Activated CD4-positive, alpha-beta memory T cell treated with anti-CD3 and anti-CD28 coated beads for 36 hours (primary cell): ENCODE measurements at regions of chr1 and their contacts with region 1.

Region 1: GRCh38 chr1:12344596-12345349 is 114.9 kb downstream of the VPS13D start:
- DNase-seq: peak; percentile 50
- H3K4me3 Mint-ChIP-seq: peak overlapping the region; percentile 65
- H3K27ac Mint-ChIP-seq: peak overlapping the region; percentile 85
- H3K4me1 Mint-ChIP-seq: peaks cover 55% of the 10 kb centered on the region
- H3K27me3 Mint-ChIP-seq: no peaks in the 10 kb centered on the region

Region 2: GRCh38 chr1:12296623-12297022 is 48.1 kb before region 1 on chr1:
- CTCF ChIA-PET with region 1: no interaction called
- POLR2A ChIA-PET with region 1: no interaction called
- intact Hi-C with region 1: loop called (anchors 2 kb)
- DNase-seq: no peak
- H3K4me3 Mint-ChIP-seq: no peak overlapping the region
- H3K27ac Mint-ChIP-seq: no peak overlapping the region
- H3K4me1 Mint-ChIP-seq: peaks cover 24% of the 10 kb centered on the region
- H3K27me3 Mint-ChIP-seq: no peaks in the 10 kb centered on the region

Region 3: GRCh38 chr1:12386130-12386529 is 41.4 kb after region 1 on chr1:
- CTCF ChIA-PET with region 1: no interaction called
- POLR2A ChIA-PET with region 1: no interaction called
- intact Hi-C with region 1: loop called (anchors 5 kb)
- DNase-seq: peak; percentile 39
- H3K4me3 Mint-ChIP-seq: no peak overlapping the region
- H3K27ac Mint-ChIP-seq: peak overlapping the region; percentile 69
- H3K4me1 Mint-ChIP-seq: peaks cover 44% of the 10 kb centered on the region
- H3K27me3 Mint-ChIP-seq: no peaks in the 10 kb centered on the region

Region 4: DNA sequence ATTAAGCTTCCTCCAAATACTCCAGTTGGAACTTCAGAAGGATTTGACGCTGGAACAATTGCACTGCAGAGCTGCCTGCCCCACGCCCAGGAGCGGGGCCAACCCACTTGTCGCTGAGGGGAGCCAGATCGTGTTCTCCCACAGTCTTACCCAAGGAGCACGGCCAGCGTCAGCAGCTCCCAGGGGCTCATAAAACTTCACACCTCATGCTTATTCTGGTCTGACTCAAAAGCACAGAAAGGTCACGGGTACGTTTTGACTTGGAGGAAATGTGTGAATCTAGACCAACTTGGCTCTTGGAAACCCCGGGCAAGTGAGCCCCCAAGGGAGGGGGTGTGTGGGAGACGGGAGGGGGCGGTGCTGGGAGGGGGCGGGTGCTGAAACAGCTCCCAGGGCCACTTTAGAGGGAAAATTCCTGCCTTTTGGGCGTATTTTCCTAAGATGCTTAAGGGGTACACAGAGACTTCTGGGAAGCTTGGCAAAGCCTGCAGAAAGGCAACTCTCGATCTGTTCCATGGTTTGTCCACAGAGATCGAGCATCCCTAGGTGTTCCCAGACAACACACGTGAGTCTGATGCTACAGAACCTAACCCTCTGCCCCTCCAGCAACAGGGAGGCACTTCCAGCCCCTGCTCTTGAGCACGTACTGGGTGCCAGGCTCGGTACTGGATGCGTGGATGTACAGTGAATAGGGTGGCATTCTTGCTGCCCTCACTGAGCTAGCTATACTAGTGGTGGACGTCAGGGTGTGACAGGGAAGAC is 174.3 kb after region 1 on chr1:
- CTCF ChIA-PET with region 1: no interaction called
- POLR2A ChIA-PET with region 1: no interaction called
- intact Hi-C with region 1: loop called (anchors 10 kb)
- DNase-seq: peak; percentile 80
- H3K4me3 Mint-ChIP-seq: no peak overlapping the region
- H3K27ac Mint-ChIP-seq: peak overlapping the region; percentile 45
- H3K4me1 Mint-ChIP-seq: peaks cover 28% of the 10 kb centered on the region
- H3K27me3 Mint-ChIP-seq: no peaks in the 10 kb centered on the region

Region 5: GRCh38 chr1:12604114-12604874 is 259.5 kb after region 1 on chr1:
- CTCF ChIA-PET with region 1: no interaction called
- POLR2A ChIA-PET with region 1: no interaction called
- intact Hi-C with region 1: loop called (anchors 1 kb)
- DNase-seq: peak; percentile 86
- H3K4me3 Mint-ChIP-seq: peak overlapping the region; percentile 39
- H3K27ac Mint-ChIP-seq: peak overlapping the region; percentile 66
- H3K4me1 Mint-ChIP-seq: peaks cover 58% of the 10 kb centered on the region
- H3K27me3 Mint-ChIP-seq: no peaks in the 10 kb centered on the region